OCI-LY7 (cell line): ENCODE measurements at regions of chr12 and their contacts with region 1.

Region 1: GRCh38 chr12:52156736-52157565 is 34.9 kb downstream of the KRT80 start:
- DNase-seq: peak; percentile 64
- H3K4me3 ChIP-seq: no peak overlapping the region
- H3K27ac ChIP-seq: no peak overlapping the region
- H3K4me1 ChIP-seq: no peaks in the 10 kb centered on the region
- CTCF ChIP-seq: peak; percentile 99

Region 2: GRCh38 chr12:52213512-52214420 is 56.8 kb after region 1 on chr12:
- CTCF ChIA-PET with region 1: no interaction called
- POLR2A ChIA-PET with region 1: no interaction called
- intact Hi-C with region 1: loop called (anchors 5 kb)
- DNase-seq: peak; percentile 49
- H3K4me3 ChIP-seq: no peak overlapping the region
- H3K27ac ChIP-seq: no peak overlapping the region
- H3K4me1 ChIP-seq: no peaks in the 10 kb centered on the region
- CTCF ChIP-seq: peak; percentile 86

Region 3: DNA sequence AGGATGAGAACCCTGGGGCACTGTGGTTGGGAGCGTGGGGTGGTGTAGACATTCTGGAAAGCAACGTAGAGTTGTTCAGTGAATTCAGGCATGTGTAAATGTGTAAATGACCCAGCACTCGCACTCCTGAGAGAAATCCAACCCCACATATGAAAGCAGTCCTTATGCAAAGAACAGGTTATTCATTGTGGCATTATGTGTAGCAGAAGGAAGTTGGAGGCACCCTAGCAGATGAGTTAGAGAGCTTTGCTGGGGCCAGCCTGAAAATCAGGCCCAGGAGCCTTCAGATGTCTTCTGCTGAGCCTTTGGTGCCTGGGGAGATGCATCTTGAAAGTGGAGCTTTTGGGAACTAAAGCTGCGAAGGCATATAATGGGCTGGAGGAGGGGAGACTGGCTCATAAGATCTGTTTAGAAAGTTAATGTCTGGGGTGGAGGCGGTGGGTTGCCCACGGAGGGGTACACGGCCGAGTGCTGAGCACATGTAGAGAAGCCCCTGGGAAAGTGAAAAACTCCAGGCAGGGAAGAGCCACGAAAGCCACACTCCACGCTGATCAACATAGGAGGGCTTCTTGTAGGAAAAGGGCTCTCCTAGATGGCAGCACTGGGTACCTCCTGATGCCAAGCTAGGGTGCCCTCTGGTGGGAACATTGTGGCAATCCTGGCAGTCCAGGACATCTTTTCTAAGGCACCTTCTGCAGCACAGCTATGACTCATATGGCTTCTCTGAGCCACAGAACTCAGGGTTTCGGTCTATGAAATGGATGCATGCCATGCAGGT is 170.3 kb after region 1 on chr12:
- CTCF ChIA-PET with region 1: no interaction called
- POLR2A ChIA-PET with region 1: no interaction called
- intact Hi-C with region 1: loop called (anchors 1 kb)
- DNase-seq: peak; percentile 80
- H3K4me3 ChIP-seq: no peak overlapping the region
- H3K27ac ChIP-seq: no peak overlapping the region
- H3K4me1 ChIP-seq: peaks cover 2% of the 10 kb centered on the region
- CTCF ChIP-seq: peak; percentile 94

Region 4: GRCh38 chr12:52865090-52865944 is 708.4 kb after region 1 on chr12:
- CTCF ChIA-PET with region 1: no interaction called
- POLR2A ChIA-PET with region 1: no interaction called
- intact Hi-C with region 1: loop called (anchors 5 kb)
- DNase-seq: peak; percentile 25
- H3K4me3 ChIP-seq: no peak overlapping the region
- H3K27ac ChIP-seq: no peak overlapping the region
- H3K4me1 ChIP-seq: peaks cover 12% of the 10 kb centered on the region
- CTCF ChIP-seq: peak; percentile 83